PC-9 (cell line): ENCODE measurements at regions of chr22 and their contacts with region 1.

Region 1: GRCh38 chr22:40410317-40410716 is 39.9 kb downstream of the SGSM3 start:
- DNase-seq: peak; percentile 67 to 81
- H3K4me3 ChIP-seq: no peak overlapping the region
- H3K27ac ChIP-seq: peak overlapping the region; percentile 22; the same call in 1 of the 2 replicates
- H3K4me1 ChIP-seq: peaks cover 13% of the 10 kb centered on the region
- H3K27me3 ChIP-seq: no peaks in the 10 kb centered on the region
- CTCF ChIP-seq: no peak

Region 2: GRCh38 chr22:40332319-40332781 is 78.0 kb before region 1 on chr22:
- CTCF ChIA-PET with region 1: no interaction called
- POLR2A ChIA-PET with region 1: no interaction called
- intact Hi-C with region 1: no loop called
- DNase-seq: no peak
- H3K4me3 ChIP-seq: no peak overlapping the region
- H3K27ac ChIP-seq: no peak overlapping the region
- H3K4me1 ChIP-seq: no peaks in the 10 kb centered on the region
- H3K27me3 ChIP-seq: no peaks in the 10 kb centered on the region
- CTCF ChIP-seq: no peak

Region 3: DNA sequence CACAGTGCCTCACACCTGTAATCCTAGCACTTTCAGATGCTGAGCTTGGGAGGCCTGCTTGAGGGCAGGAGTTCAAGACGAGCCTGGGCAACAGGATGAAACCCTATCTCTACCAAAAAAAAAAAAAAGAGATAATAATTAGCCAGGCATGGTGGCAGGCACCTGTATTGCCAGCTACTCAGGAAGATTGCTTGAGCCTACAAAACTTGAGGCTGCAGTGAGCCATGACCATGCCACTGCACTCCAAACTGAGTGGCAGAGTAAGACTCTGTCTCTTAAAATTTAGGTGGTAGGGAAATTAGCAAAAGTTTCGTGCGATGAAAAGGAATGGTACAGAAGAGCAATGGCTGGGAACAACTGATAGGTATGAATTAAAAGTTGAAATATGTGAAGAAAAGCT is 428.2 kb after region 1 on chr22:
- CTCF ChIA-PET with region 1: no interaction called
- POLR2A ChIA-PET with region 1: interaction called, 11 read pairs
- intact Hi-C with region 1: no loop called
- DNase-seq: no peak
- H3K4me3 ChIP-seq: no peak overlapping the region
- H3K27ac ChIP-seq: no peak overlapping the region
- H3K4me1 ChIP-seq: 0 out of 2 replicates have a peak, but pooled peaks cover 3% of the 10 kb centered on the region
- H3K27me3 ChIP-seq: no peaks in the 10 kb centered on the region
- CTCF ChIP-seq: no peak